Esophagus muscularis mucosa (tissue), 4 donors: ENCODE measurements at regions of chr6 and their contacts with region 1.

Region 1: GRCh38 chr6:26183581-26184366 is 96.5 kb downstream of the HFE start:
- DNase-seq: no peak
- H3K4me3 ChIP-seq: peak overlapping the region; percentile 53 to 59 (median 57)
- H3K27ac ChIP-seq: peak overlapping the region; percentile 81 to 88 (median 84)
- H3K4me1 ChIP-seq: peaks cover 7 to 24% (median 15%) of the 10 kb centered on the region in 4 donors
- H3K27me3 ChIP-seq: no peaks in the 10 kb centered on the region
- CTCF ChIP-seq: no peak
- EP300 ChIP-seq: no peak
- POLR2A ChIP-seq: no peak

Region 2: GRCh38 chr6:26045065-26045927 is 138.5 kb before region 1 on chr6:
- intact Hi-C with region 1: loop called (anchors 10 kb)
- DNase-seq: peak; percentile 95
- H3K4me3 ChIP-seq: peak overlapping the region; percentile 53 to 64 (median 58)
- H3K27ac ChIP-seq: peak overlapping the region; percentile 88 to 97 (median 94)
- H3K4me1 ChIP-seq: peaks cover 11 to 26% (median 20%) of the 10 kb centered on the region in 4 donors
- H3K27me3 ChIP-seq: no peaks in the 10 kb centered on the region
- CTCF ChIP-seq: no peak
- EP300 ChIP-seq: no peak
- POLR2A ChIP-seq: no peak